ENCODE measurements at regions of chr9 and their contacts with region 1.

Region 1: GRCh38 chr9:21110708-21111576 is 30.7 kb downstream of the IFNW1 start:
- DNase-seq: peak; percentile 63
- H3K4me3 Mint-ChIP-seq: no peak overlapping the region
- H3K27ac Mint-ChIP-seq: no peak overlapping the region
- H3K4me1 Mint-ChIP-seq: no peaks in the 10 kb centered on the region
- H3K27me3 Mint-ChIP-seq: peaks cover 25% of the 10 kb centered on the region
- CTCF ChIP-seq: peak; percentile 42

Region 2: GRCh38 chr9:20884985-20885593 is 225.9 kb before region 1 on chr9:
- CTCF ChIA-PET with region 1: interaction called, 11 read pairs
- POLR2A ChIA-PET with region 1: no interaction called
- intact Hi-C with region 1: loop called (anchors 1 kb)
- DNase-seq: peak; percentile 65
- H3K4me3 Mint-ChIP-seq: no peak overlapping the region
- H3K27ac Mint-ChIP-seq: no peak overlapping the region
- H3K4me1 Mint-ChIP-seq: no peaks in the 10 kb centered on the region
- H3K27me3 Mint-ChIP-seq: no peaks in the 10 kb centered on the region
- CTCF ChIP-seq: peak; percentile 48

Region 3: DNA sequence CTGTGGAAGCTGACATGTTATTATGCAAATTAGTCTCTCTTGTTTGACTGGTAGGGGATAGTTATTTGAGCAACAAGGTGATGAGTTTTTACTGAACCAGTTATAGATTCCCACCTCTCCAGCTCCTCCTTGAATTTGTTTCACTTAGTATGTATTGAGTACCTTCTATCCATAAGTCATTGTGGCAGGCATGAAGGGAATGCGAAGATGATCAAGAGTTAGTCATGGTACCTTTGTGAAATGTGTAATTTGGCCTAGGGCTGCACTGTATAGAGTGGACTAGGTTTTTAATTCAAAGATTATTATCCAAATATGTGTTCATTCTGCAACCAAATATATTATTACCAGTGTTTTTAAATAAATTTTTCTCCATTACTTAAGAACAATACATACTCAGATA is 189.6 kb before region 1 on chr9:
- CTCF ChIA-PET with region 1: no interaction called
- POLR2A ChIA-PET with region 1: no interaction called
- intact Hi-C with region 1: no loop called
- DNase-seq: peak; percentile 8
- H3K4me3 Mint-ChIP-seq: no peak overlapping the region
- H3K27ac Mint-ChIP-seq: no peak overlapping the region
- H3K4me1 Mint-ChIP-seq: no peaks in the 10 kb centered on the region
- H3K27me3 Mint-ChIP-seq: no peaks in the 10 kb centered on the region
- CTCF ChIP-seq: no peak

Region 4: GRCh38 chr9:21039302-21039701 is 71.6 kb before region 1 on chr9:
- CTCF ChIA-PET with region 1: no interaction called
- POLR2A ChIA-PET with region 1: no interaction called
- intact Hi-C with region 1: no loop called
- DNase-seq: no peak
- H3K4me3 Mint-ChIP-seq: no peak overlapping the region
- H3K27ac Mint-ChIP-seq: no peak overlapping the region
- H3K4me1 Mint-ChIP-seq: no peaks in the 10 kb centered on the region
- H3K27me3 Mint-ChIP-seq: no peaks in the 10 kb centered on the region
- CTCF ChIP-seq: no peak

Region 5: GRCh38 chr9:21096172-21096900 is 14.6 kb before region 1 on chr9:
- CTCF ChIA-PET with region 1: interaction called, 12 read pairs
- POLR2A ChIA-PET with region 1: interaction called, 4 read pairs
- intact Hi-C with region 1: no loop called
- DNase-seq: peak; percentile 52
- H3K4me3 Mint-ChIP-seq: peak overlapping the region; percentile 63
- H3K27ac Mint-ChIP-seq: peak overlapping the region; percentile 75
- H3K4me1 Mint-ChIP-seq: peaks cover 9% of the 10 kb centered on the region
- H3K27me3 Mint-ChIP-seq: no peaks in the 10 kb centered on the region
- CTCF ChIP-seq: no peak